ENCODE measurements at regions of chr12 and their contacts with region 1.

Region 1: DNA sequence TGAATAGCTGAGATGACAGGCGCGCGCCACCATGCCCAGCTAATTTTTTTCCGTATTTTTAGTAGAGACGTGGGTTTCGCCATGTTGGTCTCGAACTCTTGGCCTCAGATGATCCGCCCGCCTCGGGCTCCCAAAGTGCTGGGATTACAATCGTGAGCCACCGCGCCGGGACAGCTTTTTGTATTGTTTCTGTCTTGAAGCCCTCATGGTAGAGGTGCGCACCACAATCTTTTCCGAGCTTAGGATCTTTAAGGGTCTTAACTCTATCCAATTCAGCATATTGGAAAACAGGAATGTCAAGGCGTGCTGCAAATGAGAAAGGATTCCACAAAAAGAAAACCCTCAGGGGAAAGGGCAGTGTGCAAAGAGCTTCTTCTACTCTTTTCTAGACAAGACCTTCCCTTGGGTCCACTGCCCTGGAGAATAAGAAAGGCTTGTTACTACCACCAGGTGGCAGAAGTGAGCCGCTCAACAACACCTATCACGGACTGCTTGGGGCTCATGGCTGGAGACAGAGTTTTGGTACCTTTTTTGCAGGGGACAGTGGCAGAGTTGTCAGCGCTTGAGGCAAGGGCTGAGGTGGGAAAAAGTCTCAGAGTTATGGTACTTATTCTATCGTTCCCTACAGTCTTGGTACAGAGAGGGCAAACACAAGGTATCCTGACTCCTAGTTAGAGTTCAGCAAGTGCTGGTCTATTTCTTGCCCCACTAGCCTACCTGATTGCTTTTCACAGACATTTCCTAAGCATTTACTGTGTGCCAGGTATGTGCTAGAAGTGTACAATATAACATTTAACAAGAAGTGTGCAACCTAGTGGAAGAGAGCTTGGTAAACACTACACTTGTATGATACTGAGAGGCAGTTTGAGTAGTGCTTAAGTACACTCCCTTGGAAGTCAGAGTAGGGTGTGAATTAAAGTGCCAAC is 16.4 kb upstream of the SP7 start:
- DNase-seq: peak; percentile 88 to 95
- H3K4me3 ChIP-seq: no peak overlapping the region
- CTCF ChIP-seq: peak in 1 of 3 donors; percentile 75
- POLR2A ChIP-seq: no peak

Region 2: DNA sequence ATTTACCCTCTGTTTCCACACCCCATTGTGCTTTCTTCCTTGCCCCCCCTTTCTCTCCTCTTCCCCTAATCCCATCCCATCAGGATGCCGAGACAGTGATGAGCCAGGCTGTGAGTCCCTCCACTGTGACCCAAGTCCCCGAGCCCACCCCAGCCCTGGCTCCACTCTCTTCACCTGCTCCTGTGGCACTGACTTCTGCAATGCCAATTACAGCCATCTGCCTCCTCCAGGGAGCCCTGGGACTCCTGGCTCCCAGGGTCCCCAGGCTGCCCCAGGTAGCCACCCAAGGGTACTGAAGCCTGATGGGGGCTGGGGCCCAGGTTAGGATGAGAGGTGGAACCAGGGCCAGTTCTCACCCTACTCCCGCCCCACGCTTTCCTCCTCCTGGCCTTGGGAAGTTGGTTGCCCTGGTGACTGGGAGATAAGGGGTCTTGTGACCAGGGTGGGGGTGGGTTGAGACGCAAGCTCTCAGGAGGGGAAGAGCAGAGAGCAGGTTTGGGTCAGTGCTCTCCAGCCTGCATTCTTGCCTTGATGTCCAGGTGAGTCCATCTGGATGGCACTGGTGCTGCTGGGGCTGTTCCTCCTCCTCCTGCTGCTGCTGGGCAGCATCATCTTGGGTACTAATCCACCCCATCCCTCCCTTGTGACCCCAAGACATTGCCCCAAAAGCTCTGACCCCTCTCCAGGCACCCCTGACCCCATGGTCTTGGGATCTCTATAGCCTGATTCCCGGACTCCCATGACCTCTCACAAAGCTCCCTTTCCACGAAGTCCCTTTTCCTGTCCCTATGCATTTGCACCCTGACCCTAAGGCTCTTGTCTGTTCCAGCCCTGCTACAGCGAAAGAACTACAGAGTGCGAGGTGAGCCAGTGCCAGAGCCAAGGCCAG is 72.3 kb after region 1 on chr12:
- intact Hi-C with region 1: loop called (anchors 5 kb)
- DNase-seq: no peak
- H3K4me3 ChIP-seq: no peak overlapping the region
- CTCF ChIP-seq: no peak
- POLR2A ChIP-seq: no peak

Region 3: GRCh38 chr12:53538196-53538689 is 185.6 kb after region 1 on chr12:
- intact Hi-C with region 1: no loop called
- DNase-seq: peak in 1 of 2 donors; percentile 22
- H3K4me3 ChIP-seq: no peak overlapping the region
- CTCF ChIP-seq: peak in 1 of 3 donors; percentile 17
- POLR2A ChIP-seq: no peak